A673 (cell line): ENCODE measurements at regions of chr12 and their contacts with region 1.

Region 1: DNA sequence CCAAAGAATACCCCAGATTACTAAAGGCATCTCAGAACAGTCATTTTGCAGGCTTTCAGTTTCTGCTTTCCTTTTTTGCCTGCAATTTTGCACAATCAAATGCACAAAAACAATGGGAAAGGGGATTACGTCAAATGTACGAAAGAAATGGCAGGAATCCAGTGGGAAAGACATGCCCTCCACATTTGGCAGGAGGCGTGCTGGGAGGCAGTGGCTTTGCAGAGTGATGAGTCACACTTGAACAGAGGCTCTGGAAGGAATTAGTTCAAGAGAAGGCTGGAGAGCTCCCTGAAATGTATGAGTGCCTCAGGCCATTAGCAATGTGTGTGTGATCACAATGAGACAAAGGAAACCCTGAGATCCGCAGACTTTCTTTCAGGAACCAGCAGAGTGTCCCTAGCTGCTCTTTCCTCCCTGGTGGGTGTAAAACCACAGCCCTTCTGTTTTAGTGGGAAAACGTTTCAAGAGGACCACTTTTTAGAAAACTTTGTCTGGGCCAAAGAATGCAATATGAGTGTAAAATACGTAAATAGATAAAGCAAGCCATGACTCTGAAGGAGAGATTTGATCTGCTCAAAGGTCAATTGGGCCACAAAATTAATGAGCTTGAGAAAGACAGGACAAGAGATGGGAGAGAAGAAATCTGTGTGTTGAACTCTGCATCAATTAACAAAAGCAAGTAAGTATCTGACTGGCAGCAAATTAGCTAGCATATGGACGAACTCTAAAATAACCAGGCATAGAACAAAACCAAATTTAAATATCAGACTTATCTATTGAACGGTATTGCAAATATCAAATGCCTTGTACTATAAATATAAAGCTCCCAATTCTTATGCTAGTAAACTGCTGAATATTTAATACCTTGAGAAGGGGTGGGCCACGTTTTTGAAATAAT is 155.4 kb upstream of the PDE3A start:
- DNase-seq: peak; percentile 98
- H3K4me3 ChIP-seq: no peak overlapping the region
- H3K27ac ChIP-seq: peak overlapping the region; percentile 86
- H3K4me1 ChIP-seq: peaks cover 26% of the 10 kb centered on the region
- H3K27me3 ChIP-seq: no peaks in the 10 kb centered on the region
- CTCF ChIP-seq: no peak

Region 2: DNA sequence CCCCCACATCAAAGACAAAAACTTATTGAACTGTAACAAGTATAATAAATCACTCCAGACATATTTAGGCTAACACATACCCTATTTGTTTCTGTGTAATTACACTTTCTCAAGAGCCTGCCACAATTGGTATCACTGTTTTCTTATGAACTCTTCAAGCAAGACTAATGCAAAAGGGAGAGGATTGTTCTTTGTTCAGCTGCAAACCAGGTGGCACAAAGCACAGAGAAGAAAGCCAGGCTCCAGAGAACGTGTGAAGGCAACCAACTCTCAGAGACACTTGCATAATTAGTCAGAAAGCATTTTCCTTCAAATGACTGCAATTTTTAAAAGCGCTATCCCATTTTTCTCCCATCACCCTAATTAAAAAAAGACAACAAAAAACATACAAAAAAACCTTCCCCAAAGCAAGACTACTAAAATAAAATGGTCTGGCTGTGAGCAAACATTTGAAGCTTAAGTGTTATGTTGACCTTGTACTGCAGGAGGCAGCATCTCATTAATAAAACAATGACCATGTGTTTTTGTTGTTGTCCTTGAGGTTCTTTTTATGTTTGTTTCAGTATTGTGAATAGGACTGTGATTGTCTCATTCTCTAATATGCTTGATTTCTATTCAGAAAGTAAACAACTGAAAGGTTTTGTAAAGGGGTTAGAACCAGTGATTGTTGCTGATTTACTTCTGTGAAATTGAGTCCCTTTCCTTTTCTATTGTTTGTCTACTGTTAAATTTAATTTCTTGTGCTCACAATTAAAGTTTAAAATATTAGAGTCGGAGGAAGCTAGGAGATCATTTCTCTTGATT is 297.3 kb before region 1 on chr12:
- CTCF ChIA-PET with region 1: no interaction called
- POLR2A ChIA-PET with region 1: no interaction called
- intact Hi-C with region 1: loop called (anchors 10 kb)
- DNase-seq: peak; percentile 31
- H3K4me3 ChIP-seq: no peak overlapping the region
- H3K27ac ChIP-seq: no peak overlapping the region
- H3K4me1 ChIP-seq: no peaks in the 10 kb centered on the region
- H3K27me3 ChIP-seq: no peaks in the 10 kb centered on the region
- CTCF ChIP-seq: peak; percentile 64

Region 3: GRCh38 chr12:19994970-19995369 is 217.9 kb before region 1 on chr12:
- CTCF ChIA-PET with region 1: no interaction called
- POLR2A ChIA-PET with region 1: no interaction called
- intact Hi-C with region 1: loop called (anchors 10 kb)
- DNase-seq: no peak
- H3K4me3 ChIP-seq: no peak overlapping the region
- H3K27ac ChIP-seq: no peak overlapping the region
- H3K4me1 ChIP-seq: peaks cover 5% of the 10 kb centered on the region
- H3K27me3 ChIP-seq: no peaks in the 10 kb centered on the region
- CTCF ChIP-seq: peak; percentile 27; the same call in 1 of the 2 replicates

Region 4: GRCh38 chr12:20120328-20120695 is 92.6 kb before region 1 on chr12:
- CTCF ChIA-PET with region 1: no interaction called
- POLR2A ChIA-PET with region 1: no interaction called
- intact Hi-C with region 1: loop called (anchors 5 kb)
- DNase-seq: peak; percentile 16
- H3K4me3 ChIP-seq: no peak overlapping the region
- H3K27ac ChIP-seq: no peak overlapping the region
- H3K4me1 ChIP-seq: peaks cover 28% of the 10 kb centered on the region
- H3K27me3 ChIP-seq: no peaks in the 10 kb centered on the region
- CTCF ChIP-seq: no peak